Caco-2 (cell line): ENCODE measurements at regions of chr4 and their contacts with region 1.

Region 1: GRCh38 chr4:57163530-57164459 is 53.6 kb upstream of the IGFBP7 start:
- DNase-seq: peak; percentile 78 to 88
- H3K4me3 ChIP-seq: peak overlapping the region; percentile 69
- H3K4me3 Mint-ChIP-seq: peak overlapping the region; percentile 87
- H3K27ac Mint-ChIP-seq: no peak overlapping the region
- H3K4me1 ChIP-seq: no peaks in the 10 kb centered on the region
- H3K4me1 Mint-ChIP-seq: peaks cover 8% of the 10 kb centered on the region
- H3K27me3 ChIP-seq: no peaks in the 10 kb centered on the region
- H3K27me3 Mint-ChIP-seq: peaks cover 24% of the 10 kb centered on the region
- CTCF ChIP-seq: peak; percentile 86 to 90

Region 2: GRCh38 chr4:57190601-57191481 is 27.0 kb after region 1 on chr4:
- CTCF ChIA-PET with region 1: interaction called, 18 read pairs
- POLR2A ChIA-PET with region 1: no interaction called
- intact Hi-C with region 1: no loop called
- DNase-seq: peak; percentile 37 to 48
- H3K4me3 ChIP-seq: no peak overlapping the region
- H3K4me3 Mint-ChIP-seq: no peak overlapping the region
- H3K27ac Mint-ChIP-seq: no peak overlapping the region
- H3K4me1 ChIP-seq: no peaks in the 10 kb centered on the region
- H3K4me1 Mint-ChIP-seq: no peaks in the 10 kb centered on the region
- H3K27me3 ChIP-seq: no peaks in the 10 kb centered on the region
- H3K27me3 Mint-ChIP-seq: peaks cover 3% of the 10 kb centered on the region
- CTCF ChIP-seq: peak; percentile 43 to 54

Region 3: DNA sequence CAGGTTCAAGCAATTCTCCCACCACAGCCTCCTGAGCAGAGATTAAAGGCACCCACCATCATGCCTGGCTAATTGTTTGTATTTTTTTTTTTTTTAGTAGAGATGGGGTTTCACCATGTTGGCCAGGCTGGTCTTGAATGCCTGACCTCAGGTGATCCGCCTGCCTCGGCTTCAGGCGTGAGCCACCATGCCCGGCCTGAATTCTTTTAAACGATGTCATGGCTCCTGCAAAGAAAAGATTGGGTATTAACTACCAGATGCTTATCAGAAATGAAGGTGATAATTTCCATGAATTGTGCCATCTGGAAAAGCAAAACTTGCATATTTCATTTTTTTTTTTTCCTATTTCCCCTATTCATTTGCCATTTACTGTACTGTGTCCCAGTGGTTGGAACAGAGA is 142.0 kb after region 1 on chr4:
- CTCF ChIA-PET with region 1: interaction called, 7 read pairs
- POLR2A ChIA-PET with region 1: no interaction called
- intact Hi-C with region 1: loop called (anchors 2 kb)
- DNase-seq: no peak
- H3K4me3 ChIP-seq: no peak overlapping the region
- H3K4me3 Mint-ChIP-seq: no peak overlapping the region
- H3K27ac Mint-ChIP-seq: no peak overlapping the region
- H3K4me1 ChIP-seq: no peaks in the 10 kb centered on the region
- H3K4me1 Mint-ChIP-seq: no peaks in the 10 kb centered on the region
- H3K27me3 ChIP-seq: no peaks in the 10 kb centered on the region
- H3K27me3 Mint-ChIP-seq: peaks cover 13% of the 10 kb centered on the region
- CTCF ChIP-seq: no peak

Region 4: DNA sequence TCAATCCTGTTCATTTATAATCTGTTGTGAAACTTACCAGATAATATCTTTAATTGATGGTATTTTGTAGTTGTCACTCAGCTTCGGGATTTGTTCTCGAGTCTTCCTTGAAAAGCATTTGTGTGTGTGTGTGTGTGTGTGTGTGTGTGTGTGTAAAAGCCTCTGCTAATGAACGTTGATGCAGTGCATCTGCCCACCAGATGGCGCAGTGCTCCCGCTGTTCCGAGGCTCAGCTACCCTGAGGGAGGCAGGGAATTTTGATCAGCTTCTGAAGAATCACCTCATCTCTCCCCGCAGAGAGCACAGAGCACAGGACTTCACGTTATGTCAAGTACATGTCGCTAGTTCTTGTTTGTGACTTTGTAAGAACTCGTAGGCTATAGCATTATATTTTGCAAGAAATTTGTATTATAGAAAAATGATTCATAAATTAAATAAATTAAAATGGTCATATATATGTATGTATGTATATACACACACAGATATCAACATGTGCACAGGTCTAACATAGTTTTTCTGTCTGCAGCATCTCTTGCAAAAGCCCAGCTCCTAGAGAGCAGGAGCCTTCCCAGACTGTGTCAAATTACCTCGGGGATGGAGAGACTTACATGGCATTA is 263.1 kb after region 1 on chr4:
- CTCF ChIA-PET with region 1: interaction called, 5 read pairs
- POLR2A ChIA-PET with region 1: no interaction called
- intact Hi-C with region 1: loop called (anchors 1 kb)
- DNase-seq: peak; percentile 69 to 75
- H3K4me3 ChIP-seq: no peak overlapping the region
- H3K4me3 Mint-ChIP-seq: no peak overlapping the region
- H3K27ac Mint-ChIP-seq: no peak overlapping the region
- H3K4me1 ChIP-seq: no peaks in the 10 kb centered on the region
- H3K4me1 Mint-ChIP-seq: peaks cover 6% of the 10 kb centered on the region
- H3K27me3 ChIP-seq: no peaks in the 10 kb centered on the region; the same call in 1 of the 2 replicates
- H3K27me3 Mint-ChIP-seq: peaks cover 20% of the 10 kb centered on the region
- CTCF ChIP-seq: peak; percentile 64 to 83